ENCODE measurements at regions of chr14 and their contacts with region 1.

Region 1: GRCh38 chr14:20970983-20971704 is 15.9 kb downstream of the RNASE2 start:
- DNase-seq: peak; percentile 75 to 88
- ATAC-seq: peak; percentile 91 to 94 (median 92)
- H3K4me3 ChIP-seq: peak overlapping the region; percentile 80
- H3K4me3 Mint-ChIP-seq: peak overlapping the region; percentile 89
- H3K27ac ChIP-seq: no peak overlapping the region
- H3K27ac Mint-ChIP-seq: peak overlapping the region in 1 of 2 donors; percentile 87
- H3K4me1 ChIP-seq: peaks cover 14% of the 10 kb centered on the region
- H3K4me1 Mint-ChIP-seq: peaks cover 15 to 18% of the 10 kb centered on the region in 2 donors
- H3K27me3 ChIP-seq: peaks cover 8% of the 10 kb centered on the region
- H3K27me3 Mint-ChIP-seq: peaks cover 29 to 48% of the 10 kb centered on the region in 2 donors
- CTCF ChIP-seq: peak; percentile 92

Region 2: DNA sequence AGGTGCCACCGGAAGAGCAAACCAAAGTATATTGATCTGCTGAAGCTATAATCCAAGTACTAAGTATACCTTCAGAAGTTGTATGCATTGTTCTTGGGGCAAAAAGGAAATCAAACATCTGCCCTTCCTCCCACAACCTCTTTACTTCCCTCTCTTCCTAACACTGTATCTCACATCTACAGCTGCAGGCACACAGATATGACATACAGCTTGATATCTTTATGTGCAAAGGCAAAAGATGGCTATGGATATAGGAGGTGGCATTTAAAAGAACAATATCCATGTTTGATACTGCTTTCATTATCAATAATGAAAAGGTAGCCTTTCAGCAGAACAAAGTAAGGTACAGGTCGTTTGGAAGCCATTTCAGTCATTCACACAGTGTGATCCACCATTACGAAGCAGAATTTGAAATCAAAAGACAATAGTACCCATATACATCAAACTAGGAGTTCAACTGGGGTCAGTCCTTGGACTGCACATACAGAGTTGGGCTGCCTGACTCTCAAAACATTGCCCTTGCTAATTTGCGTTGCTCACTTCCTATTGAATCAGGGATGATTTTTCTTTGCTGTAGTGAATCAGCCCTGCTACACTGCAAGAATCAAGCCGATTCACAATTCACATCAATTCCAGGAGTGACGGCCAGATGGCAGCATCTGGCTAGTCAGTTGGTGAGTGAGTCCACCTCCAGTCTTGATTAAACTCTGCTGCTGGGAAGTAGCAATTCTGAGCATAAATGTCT is 273.7 kb before region 1 on chr14:
- intact Hi-C with region 1: loop called (anchors 1 kb)
- DNase-seq: peak; percentile 61 to 82
- ATAC-seq: peak; percentile 78 to 85 (median 82)
- H3K4me3 ChIP-seq: no peak overlapping the region
- H3K4me3 Mint-ChIP-seq: no peak overlapping the region
- H3K27ac ChIP-seq: no peak overlapping the region
- H3K27ac Mint-ChIP-seq: no peak overlapping the region
- H3K4me1 ChIP-seq: no peaks in the 10 kb centered on the region
- H3K4me1 Mint-ChIP-seq: no peaks in the 10 kb centered on the region
- H3K27me3 ChIP-seq: no peaks in the 10 kb centered on the region
- H3K27me3 Mint-ChIP-seq: no peaks in the 10 kb centered on the region
- CTCF ChIP-seq: peak; percentile 85

Region 3: GRCh38 chr14:20757965-20758364 is 213.2 kb before region 1 on chr14:
- intact Hi-C with region 1: loop called (anchors 1 kb)
- DNase-seq: peak; percentile 21 to 61
- ATAC-seq: peak in 1 of 3 donors; percentile 59
- H3K4me3 ChIP-seq: no peak overlapping the region
- H3K4me3 Mint-ChIP-seq: no peak overlapping the region
- H3K27ac ChIP-seq: no peak overlapping the region
- H3K27ac Mint-ChIP-seq: no peak overlapping the region
- H3K4me1 ChIP-seq: no peaks in the 10 kb centered on the region
- H3K4me1 Mint-ChIP-seq: peaks cover 0 to 5% of the 10 kb centered on the region in 2 donors
- H3K27me3 ChIP-seq: no peaks in the 10 kb centered on the region
- H3K27me3 Mint-ChIP-seq: no peaks in the 10 kb centered on the region
- CTCF ChIP-seq: peak; percentile 46

Region 4: GRCh38 chr14:20855652-20856291 is 115.4 kb before region 1 on chr14:
- intact Hi-C with region 1: loop called (anchors 1 kb)
- DNase-seq: peak; percentile 21 to 74
- ATAC-seq: peak; percentile 85 to 94 (median 91)
- H3K4me3 ChIP-seq: no peak overlapping the region
- H3K4me3 Mint-ChIP-seq: no peak overlapping the region
- H3K27ac ChIP-seq: no peak overlapping the region
- H3K27ac Mint-ChIP-seq: no peak overlapping the region
- H3K4me1 ChIP-seq: peaks cover 2% of the 10 kb centered on the region
- H3K4me1 Mint-ChIP-seq: peaks cover 0 to 6% of the 10 kb centered on the region in 2 donors
- H3K27me3 ChIP-seq: no peaks in the 10 kb centered on the region
- H3K27me3 Mint-ChIP-seq: peaks cover 0 to 23% of the 10 kb centered on the region in 2 donors
- CTCF ChIP-seq: peak; percentile 77

Measured in natural killer cell (primary cell).